ENCODE measurements at regions of chr6 and their contacts with region 1.

Region 1: GRCh38 chr6:127606131-127606562 is 29.2 kb downstream of the C6orf58 start:
- DNase-seq: peak in 1 of 2 experiments; percentile 59
- H3K4me3 ChIP-seq: no peak overlapping the region
- H3K27ac ChIP-seq: no peak overlapping the region
- H3K4me1 ChIP-seq: peaks cover 0 to 3% (median 1%) of the 10 kb centered on the region in 4 experiments; a peak in 2 of 7 replicates
- H3K27me3 ChIP-seq: no peaks in the 10 kb centered on the region
- CTCF ChIP-seq: peak in 2 of 3 experiments; percentile 61 to 64; a peak in 3 of 4 replicates
- EP300 ChIP-seq: no peak
- POLR2A ChIP-seq: no peak
- RAD21 ChIP-seq: peak; percentile 87 to 88

Region 2: GRCh38 chr6:127554435-127555006 is 51.6 kb before region 1 on chr6:
- CTCF ChIA-PET with region 1: no interaction called
- POLR2A ChIA-PET with region 1: no interaction called
- DNase-seq: no peak
- H3K4me3 ChIP-seq: no peak overlapping the region
- H3K27ac ChIP-seq: no peak overlapping the region
- H3K4me1 ChIP-seq: no peaks in the 10 kb centered on the region
- H3K27me3 ChIP-seq: no peaks in the 10 kb centered on the region
- CTCF ChIP-seq: peak; percentile 7 to 64 (median 63)
- EP300 ChIP-seq: no peak
- POLR2A ChIP-seq: no peak
- RAD21 ChIP-seq: peak; percentile 78 to 87

Region 3: DNA sequence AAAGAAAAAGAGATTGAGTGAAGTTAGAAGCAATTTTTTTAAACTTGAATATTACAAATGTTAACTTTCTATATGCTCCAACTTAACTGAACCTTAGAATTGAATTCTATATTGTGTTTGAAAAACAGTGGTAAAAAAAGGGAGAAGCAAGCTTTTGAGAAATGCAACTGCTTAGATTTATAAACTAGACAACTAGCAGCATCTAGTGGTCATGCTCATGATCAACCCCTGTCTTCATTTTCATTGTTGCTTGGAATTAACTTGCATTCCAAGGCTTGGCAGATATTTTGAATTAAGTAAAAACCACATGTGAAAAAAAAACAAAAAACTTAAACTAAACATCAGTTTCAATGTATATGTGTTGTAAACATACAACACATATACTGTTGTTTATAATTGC is 83.9 kb after region 1 on chr6:
- CTCF ChIA-PET with region 1: interaction called, 21 read pairs
- POLR2A ChIA-PET with region 1: no interaction called
- DNase-seq: no peak
- H3K4me3 ChIP-seq: no peak overlapping the region
- H3K27ac ChIP-seq: no peak overlapping the region
- H3K4me1 ChIP-seq: no peaks in the 10 kb centered on the region
- H3K27me3 ChIP-seq: no peaks in the 10 kb centered on the region
- CTCF ChIP-seq: peak in 2 of 3 experiments; percentile 54 to 74; a peak in 2 of 4 replicates
- EP300 ChIP-seq: no peak
- POLR2A ChIP-seq: no peak
- RAD21 ChIP-seq: peak; percentile 83 to 86

Measured in H1 (cell line).